HepG2 (cell line): ENCODE measurements at regions of chr14 and their contacts with region 1.

Region 1: GRCh38 chr14:36373982-36374673 is 53.7 kb upstream of the MBIP start:
- DNase-seq: peak; percentile 92
- ATAC-seq: peak; percentile 99
- H3K4me3 ChIP-seq: no peak overlapping the region
- H3K27ac ChIP-seq: no peak overlapping the region
- H3K4me1 ChIP-seq: no peaks in the 10 kb centered on the region
- H3K27me3 ChIP-seq: no peaks in the 10 kb centered on the region; a peak in 1 of 5 replicates
- CTCF ChIP-seq: peak; percentile 99
- EP300 ChIP-seq: 0 out of 4 replicates have a peak, but pooled peaks of 1 of the 2 experiments have one; percentile 46
- POLR2A ChIP-seq: no peak
- RAD21 ChIP-seq: peak; percentile 93

Region 2: DNA sequence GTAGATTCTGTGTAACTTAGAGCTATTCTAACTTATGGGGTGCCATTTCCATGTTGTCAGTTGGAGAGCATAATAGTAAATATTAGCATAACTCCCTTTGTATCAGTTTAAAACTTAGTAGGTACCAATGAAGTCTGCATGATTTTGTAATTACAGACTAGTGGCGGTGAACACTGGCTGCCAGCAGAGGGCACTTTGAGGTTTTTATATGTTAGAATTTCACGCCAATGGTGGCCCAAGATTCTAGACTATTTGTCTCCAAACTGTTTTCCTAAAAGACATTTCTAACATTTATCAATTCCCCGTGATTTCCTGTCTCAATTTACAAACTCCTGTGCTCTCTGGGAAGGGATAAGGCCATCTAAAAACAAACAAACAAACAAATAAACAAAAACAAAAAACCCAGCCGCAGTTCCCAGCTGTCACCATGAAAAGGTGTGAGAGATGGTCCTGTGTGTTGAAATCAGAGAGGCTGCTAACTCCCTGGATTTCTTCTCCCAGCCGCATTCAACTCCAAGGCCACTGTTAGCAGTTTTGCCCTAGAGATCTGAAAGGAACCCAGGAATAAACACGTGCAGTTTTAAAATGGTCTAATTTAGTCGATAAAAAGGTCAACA is 490.3 kb before region 1 on chr14:
- CTCF ChIA-PET with region 1: no interaction called
- POLR2A ChIA-PET with region 1: no interaction called
- in situ Hi-C with region 1: no loop called
- intact Hi-C with region 1: loop called (anchors 1 kb)
- DNase-seq: peak; percentile 50
- ATAC-seq: peak; percentile 83
- H3K4me3 ChIP-seq: no peak overlapping the region
- H3K27ac ChIP-seq: no peak overlapping the region
- H3K4me1 ChIP-seq: peaks cover 5% of the 10 kb centered on the region; the same call in 1 of the 2 replicates
- H3K27me3 ChIP-seq: no peaks in the 10 kb centered on the region; a peak in 1 of 5 replicates
- CTCF ChIP-seq: peak; percentile 82
- EP300 ChIP-seq: 0 out of 4 replicates have a peak, but pooled peaks of 1 of the 2 experiments have one; percentile 4
- POLR2A ChIP-seq: no peak
- RAD21 ChIP-seq: peak; percentile 21; the same call in 1 of the 2 replicates

Region 3: GRCh38 chr14:35963209-35963608 is 410.9 kb before region 1 on chr14:
- CTCF ChIA-PET with region 1: no interaction called
- POLR2A ChIA-PET with region 1: no interaction called
- in situ Hi-C with region 1: no loop called
- intact Hi-C with region 1: loop called (anchors 5 kb)
- DNase-seq: peak; percentile 45
- ATAC-seq: peak; percentile 93
- H3K4me3 ChIP-seq: no peak overlapping the region
- H3K27ac ChIP-seq: no peak overlapping the region
- H3K4me1 ChIP-seq: no peaks in the 10 kb centered on the region
- H3K27me3 ChIP-seq: peaks cover 0 to 3% of the 10 kb centered on the region in 2 experiments; a peak in 1 of 5 replicates
- CTCF ChIP-seq: peak; percentile 48
- EP300 ChIP-seq: no peak
- POLR2A ChIP-seq: no peak
- RAD21 ChIP-seq: no peak

Region 4: DNA sequence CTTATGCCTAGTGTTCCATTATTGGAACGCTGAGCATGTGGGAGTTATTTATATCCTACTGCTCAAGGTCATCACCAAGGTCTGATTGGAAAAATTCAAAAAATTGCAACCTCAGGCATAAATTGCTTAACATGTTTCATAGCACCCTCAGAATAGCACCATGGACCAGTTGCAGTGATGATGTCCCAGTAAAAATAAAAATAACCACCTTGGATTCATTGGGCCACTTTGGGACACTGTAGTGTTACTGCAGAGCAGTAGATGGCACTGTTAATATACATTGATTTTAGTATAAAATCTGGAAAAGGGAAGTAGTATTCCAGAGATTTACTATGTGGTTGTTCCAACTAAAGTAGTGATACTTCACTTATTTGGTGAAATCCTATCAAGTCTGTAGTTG is 166.6 kb before region 1 on chr14:
- CTCF ChIA-PET with region 1: interaction called, 21 read pairs
- POLR2A ChIA-PET with region 1: no interaction called
- in situ Hi-C with region 1: loop called (anchors 5 kb)
- intact Hi-C with region 1: loop called (anchors 1 kb)
- DNase-seq: peak; percentile 35
- ATAC-seq: peak; percentile 70
- H3K4me3 ChIP-seq: no peak overlapping the region
- H3K27ac ChIP-seq: no peak overlapping the region
- H3K4me1 ChIP-seq: no peaks in the 10 kb centered on the region
- H3K27me3 ChIP-seq: peaks cover 2 to 37% of the 10 kb centered on the region in 2 experiments
- CTCF ChIP-seq: peak; percentile 53
- EP300 ChIP-seq: no peak
- POLR2A ChIP-seq: no peak
- RAD21 ChIP-seq: no peak

Region 5: DNA sequence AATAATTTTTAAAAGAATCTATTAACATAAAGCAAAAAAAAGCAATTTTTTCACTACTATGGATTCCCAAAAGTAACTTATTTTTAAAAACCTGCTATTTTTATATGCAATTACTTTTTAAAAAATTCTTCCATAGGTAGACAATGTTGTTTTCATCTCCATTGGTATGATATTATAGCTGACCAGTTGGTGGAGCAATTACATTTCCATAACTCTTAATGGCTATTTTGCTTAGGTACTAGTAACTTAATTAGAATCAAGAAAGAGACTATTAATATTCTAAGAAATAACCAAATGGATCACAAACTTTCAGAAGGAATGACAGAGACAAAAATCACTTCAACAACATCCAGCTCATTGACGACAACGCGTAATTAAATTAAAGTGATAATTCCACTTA is 132.9 kb before region 1 on chr14:
- CTCF ChIA-PET with region 1: interaction called, 8 read pairs
- POLR2A ChIA-PET with region 1: no interaction called
- in situ Hi-C with region 1: no loop called
- intact Hi-C with region 1: loop called (anchors 1 kb)
- DNase-seq: no peak
- ATAC-seq: no peak
- H3K4me3 ChIP-seq: no peak overlapping the region
- H3K27ac ChIP-seq: no peak overlapping the region
- H3K4me1 ChIP-seq: peaks cover 7% of the 10 kb centered on the region; the same call in 1 of the 2 replicates
- H3K27me3 ChIP-seq: peaks cover 0 to 13% of the 10 kb centered on the region in 2 experiments; a peak in 3 of 5 replicates
- CTCF ChIP-seq: 0 out of 2 replicates have a peak, but pooled peaks have one; percentile 21
- EP300 ChIP-seq: no peak
- POLR2A ChIP-seq: no peak
- RAD21 ChIP-seq: no peak

Region 6: DNA sequence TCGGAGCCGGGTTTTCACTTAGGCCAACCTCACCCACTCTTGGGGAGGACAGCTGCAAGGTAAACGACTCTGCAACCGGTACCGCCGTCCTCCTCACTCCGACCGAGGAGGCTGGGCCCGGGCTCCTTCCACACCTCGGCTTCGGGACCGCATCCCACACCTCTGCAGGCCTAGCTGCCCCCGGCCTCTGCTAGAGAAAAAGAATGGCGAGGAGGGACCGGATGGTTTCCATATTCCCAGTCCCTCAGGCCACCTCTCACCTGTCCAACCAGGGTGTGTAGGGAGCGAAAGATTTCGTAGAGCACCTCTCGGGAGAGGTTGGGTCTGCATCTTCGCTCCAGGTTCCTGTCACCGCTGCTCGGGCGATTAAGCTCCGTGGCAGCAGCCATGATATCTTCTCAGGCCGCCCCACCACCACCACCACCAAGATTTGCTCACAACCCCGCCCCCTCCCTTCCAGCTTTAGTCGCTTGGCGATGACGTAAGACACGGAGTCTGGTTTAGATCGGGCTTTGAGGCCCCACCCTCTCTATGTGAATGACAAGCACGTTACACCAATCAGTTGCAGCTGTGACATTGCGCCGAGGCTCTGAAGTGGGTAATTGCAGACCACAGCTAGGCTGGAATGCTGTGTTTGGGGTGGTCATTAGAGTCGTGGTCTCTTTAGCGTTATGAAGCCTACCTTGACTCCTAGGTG is 53.8 kb before region 1 on chr14 and contains the start of gene MBIP:
- CTCF ChIA-PET with region 1: no interaction called
- POLR2A ChIA-PET with region 1: interaction called, 4 read pairs
- in situ Hi-C with region 1: no loop called
- intact Hi-C with region 1: loop called (anchors 1 kb)
- DNase-seq: peak; percentile 100
- ATAC-seq: peak; percentile 98
- H3K4me3 ChIP-seq: peak within 1 kb of the TSS; percentile 95 to 96 (median 96)
- H3K27ac ChIP-seq: peak within 1 kb of the TSS; percentile 82
- H3K4me1 ChIP-seq: peaks cover 24% of the 10 kb centered on the region
- H3K27me3 ChIP-seq: peaks cover 0 to 16% of the 10 kb centered on the region in 2 experiments; a peak in 1 of 5 replicates
- CTCF ChIP-seq: peak; percentile 11; the same call in 1 of the 2 replicates
- EP300 ChIP-seq: no peak
- POLR2A ChIP-seq: peak; percentile 93 to 94
- RAD21 ChIP-seq: peak; percentile 37; the same call in 1 of the 2 replicates
- total RNA-seq, gene MBIP: 48.6 and 57.3 TPM in 2 replicates

Region 7: DNA sequence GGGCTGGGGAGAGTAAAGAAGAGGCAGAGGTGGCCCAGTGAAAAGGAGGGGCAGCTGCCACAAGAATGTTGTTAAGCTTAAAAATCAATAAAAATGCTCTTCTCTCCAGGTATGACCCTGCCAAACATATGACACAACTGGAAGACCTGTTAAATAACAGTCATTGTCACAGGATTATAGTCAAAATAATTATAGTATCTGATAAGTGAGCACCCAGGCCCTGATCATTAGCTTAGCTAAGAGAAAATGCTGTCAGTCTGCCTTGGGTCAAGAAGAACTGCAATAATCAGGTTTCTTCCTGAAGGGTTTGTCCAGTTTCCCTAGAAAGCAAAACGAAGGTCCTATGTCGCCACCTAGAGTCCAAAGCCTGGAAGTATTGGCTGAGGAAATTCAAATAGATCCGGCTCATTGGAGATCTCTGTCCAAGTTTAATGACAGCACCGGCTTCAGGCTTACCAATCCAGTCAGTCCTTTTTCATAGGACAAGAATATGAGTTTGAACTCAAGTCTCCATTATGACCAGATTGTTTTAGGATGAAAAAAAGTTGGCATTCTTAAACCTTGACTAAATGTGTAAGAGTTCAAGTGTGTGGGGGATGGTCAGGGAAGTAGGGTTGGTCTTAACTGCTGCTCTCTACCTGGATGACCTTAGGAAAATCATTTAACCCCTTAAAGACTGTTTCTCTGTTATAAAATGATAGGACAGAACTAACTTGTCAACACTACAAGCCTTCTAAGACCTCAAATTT is 230.8 kb after region 1 on chr14:
- CTCF ChIA-PET with region 1: interaction called, 3 read pairs
- POLR2A ChIA-PET with region 1: no interaction called
- in situ Hi-C with region 1: no loop called
- intact Hi-C with region 1: loop called (anchors 10 kb)
- DNase-seq: peak; percentile 93
- ATAC-seq: peak; percentile 90
- H3K4me3 ChIP-seq: no peak overlapping the region
- H3K27ac ChIP-seq: no peak overlapping the region
- H3K4me1 ChIP-seq: peaks cover 7% of the 10 kb centered on the region; the same call in 1 of the 2 replicates
- H3K27me3 ChIP-seq: 0 out of 5 replicates have a peak, but pooled peaks cover 0 to 7% of the 10 kb centered on the region in 2 experiments
- CTCF ChIP-seq: peak; percentile 95
- EP300 ChIP-seq: no peak
- POLR2A ChIP-seq: no peak
- RAD21 ChIP-seq: peak; percentile 79